ENCODE measurements at regions of chr1 and their contacts with region 1.

Region 1: DNA sequence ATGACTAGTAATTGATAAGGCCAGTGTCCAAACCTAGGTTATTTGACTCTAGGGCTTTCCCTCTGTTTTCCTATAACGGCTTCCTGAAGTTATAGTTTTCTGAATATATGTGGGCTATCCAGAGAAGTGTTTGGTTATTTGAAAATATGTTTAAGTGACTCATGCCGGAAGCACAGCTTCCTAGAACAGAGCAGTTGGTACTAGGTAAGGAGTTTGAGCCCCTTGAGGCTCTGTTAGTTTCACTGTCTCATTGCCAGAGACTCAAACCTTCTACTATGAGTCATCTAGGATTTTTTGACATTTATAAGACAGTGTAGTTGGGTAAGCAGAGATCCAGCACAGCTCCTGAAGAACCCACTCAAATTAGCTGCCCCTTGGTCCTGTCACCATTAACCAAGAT is 27.1 kb upstream of the LEPR start:
- DNase-seq: peak; percentile 81
- H3K4me3 Mint-ChIP-seq: peak overlapping the region; percentile 38
- H3K27ac Mint-ChIP-seq: peak overlapping the region; percentile 54
- H3K4me1 Mint-ChIP-seq: peaks cover 72% of the 10 kb centered on the region
- H3K27me3 Mint-ChIP-seq: no peaks in the 10 kb centered on the region

Region 2: DNA sequence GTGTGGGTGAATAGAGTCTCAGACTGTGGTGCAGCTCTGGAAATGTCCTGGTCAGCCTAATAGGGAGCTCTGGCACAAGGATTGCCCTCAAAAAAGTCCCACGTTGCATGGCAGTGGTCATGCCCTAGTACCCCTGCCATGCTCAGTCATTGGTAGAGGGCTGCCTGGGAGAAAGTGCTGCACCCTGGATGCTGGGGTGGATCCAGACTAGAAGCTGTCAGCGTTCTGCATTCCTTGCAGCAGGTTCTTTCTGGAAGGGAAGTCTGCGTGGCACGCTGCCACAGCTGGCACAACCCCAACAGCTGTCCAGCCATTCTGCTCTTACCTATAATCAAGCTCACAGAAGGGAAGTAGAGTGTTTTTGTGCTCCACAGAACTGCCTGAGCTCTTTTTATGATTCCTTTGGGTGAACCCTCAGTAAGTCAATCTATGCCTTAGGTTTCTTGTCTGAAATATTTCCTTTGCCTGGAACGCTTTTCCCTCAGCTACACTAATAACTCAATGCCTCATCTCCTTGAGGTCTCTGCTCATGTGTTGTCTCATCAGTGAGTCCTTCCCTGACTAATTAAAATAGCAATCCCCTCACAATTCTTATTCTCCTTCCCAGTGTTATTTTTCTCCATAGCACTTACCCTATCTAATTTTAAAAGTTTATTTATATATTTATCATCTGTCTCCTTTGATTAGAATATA is 365.5 kb before region 1 on chr1:
- intact Hi-C with region 1: no loop called
- DNase-seq: no peak
- H3K4me3 Mint-ChIP-seq: no peak overlapping the region
- H3K27ac Mint-ChIP-seq: no peak overlapping the region
- H3K4me1 Mint-ChIP-seq: no peaks in the 10 kb centered on the region
- H3K27me3 Mint-ChIP-seq: peaks cover 12% of the 10 kb centered on the region

Region 3: GRCh38 chr1:65213271-65214023 is 179.9 kb before region 1 on chr1:
- intact Hi-C with region 1: loop called (anchors 2 kb)
- DNase-seq: peak; percentile 63
- H3K4me3 Mint-ChIP-seq: peak overlapping the region; percentile 72
- H3K27ac Mint-ChIP-seq: peak overlapping the region; percentile 93
- H3K4me1 Mint-ChIP-seq: peaks cover 69% of the 10 kb centered on the region
- H3K27me3 Mint-ChIP-seq: no peaks in the 10 kb centered on the region

Region 4: GRCh38 chr1:65260946-65261411 is 132.4 kb before region 1 on chr1:
- intact Hi-C with region 1: loop called (anchors 2 kb)
- DNase-seq: peak; percentile 63
- H3K4me3 Mint-ChIP-seq: no peak overlapping the region
- H3K27ac Mint-ChIP-seq: peak overlapping the region; percentile 58
- H3K4me1 Mint-ChIP-seq: peaks cover 25% of the 10 kb centered on the region
- H3K27me3 Mint-ChIP-seq: peaks cover 25% of the 10 kb centered on the region

Region 5: DNA sequence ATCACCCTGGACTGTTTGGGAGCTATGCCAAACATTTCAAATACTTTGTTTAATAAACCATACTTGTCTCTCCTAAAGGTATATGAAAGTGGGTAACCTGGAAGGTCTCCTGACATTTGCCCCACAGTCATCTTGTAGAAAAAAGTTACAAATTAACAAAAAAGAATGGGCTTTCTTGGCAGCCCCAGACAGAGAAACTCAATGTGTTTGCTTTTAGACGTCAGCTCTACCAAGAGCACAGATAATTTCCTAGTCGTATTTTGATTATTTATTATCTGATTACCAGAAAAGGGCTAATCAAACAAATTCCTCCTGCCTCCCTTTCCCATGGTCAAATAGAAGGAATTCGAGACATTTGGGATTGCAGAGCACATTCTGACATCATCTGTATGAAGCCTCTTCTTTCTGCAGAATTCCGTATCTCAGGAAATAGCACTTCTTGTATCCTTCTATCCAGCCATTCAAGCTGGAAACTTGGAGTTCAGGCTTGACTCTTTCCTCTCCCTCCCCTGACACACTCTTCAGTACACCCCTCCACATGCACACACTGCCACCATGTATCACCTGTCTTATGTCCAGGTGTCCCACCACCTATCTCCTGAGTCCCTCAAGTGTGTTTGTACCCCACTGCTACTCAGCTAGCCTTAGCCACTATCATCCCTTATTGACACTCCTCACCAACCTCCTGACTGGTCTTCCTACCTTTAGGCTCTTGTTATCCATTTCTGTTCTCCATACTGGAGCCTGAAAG is 15.7 kb before region 1 on chr1:
- intact Hi-C with region 1: no loop called
- DNase-seq: no peak
- H3K4me3 Mint-ChIP-seq: no peak overlapping the region
- H3K27ac Mint-ChIP-seq: no peak overlapping the region
- H3K4me1 Mint-ChIP-seq: no peaks in the 10 kb centered on the region
- H3K27me3 Mint-ChIP-seq: peaks cover 16% of the 10 kb centered on the region

Region 6: DNA sequence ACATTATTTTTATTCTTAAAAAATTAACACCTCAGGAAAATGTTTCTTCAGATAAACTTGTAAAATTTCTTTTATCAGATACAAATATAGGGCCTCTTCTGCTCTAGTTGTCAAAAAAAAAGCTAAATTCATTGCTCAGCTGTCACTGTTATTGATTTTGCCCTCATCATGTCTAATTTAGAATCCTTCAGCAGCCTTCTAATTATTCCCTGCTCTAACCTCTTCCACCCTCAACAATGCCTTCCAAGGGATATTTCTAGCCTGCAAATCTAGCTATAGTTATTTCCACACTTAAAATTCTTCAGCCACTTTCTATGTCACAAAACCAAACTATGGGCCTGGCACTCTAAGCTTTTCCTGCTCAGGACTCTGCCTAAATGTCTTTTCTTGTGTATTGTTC is 424.5 kb after region 1 on chr1:
- intact Hi-C with region 1: loop called (anchors 2 kb)
- DNase-seq: no peak
- H3K4me3 Mint-ChIP-seq: no peak overlapping the region
- H3K27ac Mint-ChIP-seq: no peak overlapping the region
- H3K4me1 Mint-ChIP-seq: peaks cover 7% of the 10 kb centered on the region
- H3K27me3 Mint-ChIP-seq: peaks cover 36% of the 10 kb centered on the region